Gastrocnemius medialis (tissue), 4 donors: ENCODE measurements at regions of chr10 and their contacts with region 1.

Region 1: GRCh38 chr10:100373298-100374136 is 26.5 kb downstream of the SCD start:
- DNase-seq: peak; percentile 98 to 99
- ATAC-seq: peak; percentile 77 to 80
- H3K4me3 ChIP-seq: peak overlapping the region; percentile 66 to 76 (median 74)
- H3K27ac ChIP-seq: peak overlapping the region; percentile 97 to 99 (median 97)
- H3K4me1 ChIP-seq: peaks cover 42 to 45% of the 10 kb centered on the region in 2 donors
- H3K27me3 ChIP-seq: no peaks in the 10 kb centered on the region
- CTCF ChIP-seq: no peak
- POLR2A ChIP-seq: peak; percentile 45 to 85

Region 2: GRCh38 chr10:99620713-99621453 is 752.6 kb before region 1 on chr10:
- in situ Hi-C with region 1: no loop called
- intact Hi-C with region 1: loop called (anchors 5 kb)
- DNase-seq: peak; percentile 86 to 91
- ATAC-seq: peak; percentile 70 to 89
- H3K4me3 ChIP-seq: peak overlapping the region; percentile 71 to 81 (median 75)
- H3K27ac ChIP-seq: peak overlapping the region; percentile 91 to 97 (median 96)
- H3K4me1 ChIP-seq: peaks cover 37 to 39% of the 10 kb centered on the region in 2 donors
- H3K27me3 ChIP-seq: no peaks in the 10 kb centered on the region
- CTCF ChIP-seq: peak in 3 of 5 experiments; percentile 18 to 20 (median 19)
- POLR2A ChIP-seq: peak; percentile 54 to 89

Region 3: GRCh38 chr10:100267237-100268104 is 106.0 kb before region 1 on chr10 and contains the start of gene CWF19L1:
- in situ Hi-C with region 1: no loop called
- intact Hi-C with region 1: no loop called
- DNase-seq: peak; percentile 78 to 86
- ATAC-seq: peak; percentile 99
- H3K4me3 ChIP-seq: peak within 1 kb of the TSS; percentile 68 to 99 (median 90)
- H3K27ac ChIP-seq: peak within 1 kb of the TSS; percentile 76 to 86 (median 80)
- H3K4me1 ChIP-seq: peaks cover 9 to 20% of the 10 kb centered on the region in 2 donors
- H3K27me3 ChIP-seq: no peaks in the 10 kb centered on the region
- CTCF ChIP-seq: no peak
- POLR2A ChIP-seq: peak; percentile 14 to 25
- total RNA-seq, gene CWF19L1: 11.6 to 13.8 (median 13.0) TPM

Region 4: DNA sequence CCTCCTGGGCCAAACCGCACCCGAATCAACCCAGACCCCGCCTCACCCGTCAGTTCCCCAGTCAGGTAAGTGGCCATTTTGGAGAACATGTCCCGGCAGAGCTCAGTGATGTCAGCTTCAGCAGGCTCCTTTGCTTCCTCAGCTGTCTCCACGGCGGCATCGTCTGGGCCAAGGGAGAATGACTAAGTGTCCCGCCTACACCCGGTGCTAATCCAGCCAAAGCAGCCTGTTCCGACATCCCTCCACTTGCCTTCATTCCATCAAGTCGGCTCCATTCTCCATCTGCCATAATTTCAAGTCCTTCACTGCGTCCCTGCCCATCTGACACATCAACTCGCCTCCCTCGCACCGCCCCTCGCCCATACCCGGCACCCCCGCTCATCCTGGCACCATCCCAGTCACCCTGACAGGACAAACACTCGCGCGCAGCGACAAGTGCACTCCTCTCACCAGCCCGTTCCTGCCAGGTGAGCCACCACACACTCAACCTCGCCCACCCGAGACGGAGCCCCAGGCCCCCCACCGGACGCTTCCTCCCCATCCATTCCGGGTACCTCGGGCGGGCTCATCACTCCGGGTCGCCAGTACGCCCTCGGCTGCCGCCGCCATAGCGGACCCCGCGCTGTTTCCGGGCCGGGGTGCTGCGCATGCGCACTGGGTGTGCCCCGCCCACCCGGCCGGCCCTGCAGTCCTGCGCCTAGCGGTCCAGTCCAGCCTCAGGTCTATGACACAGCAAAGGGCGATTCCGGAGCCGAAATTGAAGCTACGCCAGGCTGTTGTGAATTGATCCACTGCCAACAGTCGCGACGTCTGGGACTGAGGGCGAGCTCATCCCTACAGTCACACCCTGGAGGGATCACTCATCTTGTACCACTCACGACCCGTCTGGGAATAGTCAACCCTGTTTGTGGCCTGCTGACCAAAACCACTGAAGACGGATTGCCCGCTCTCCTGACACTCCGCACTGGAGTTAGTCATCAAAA is 87.2 kb before region 1 on chr10 and contains the start of gene BLOC1S2:
- in situ Hi-C with region 1: no loop called
- intact Hi-C with region 1: loop called (anchors 2 kb)
- DNase-seq: peak; percentile 80 to 90
- ATAC-seq: peak; percentile 89 to 92
- H3K4me3 ChIP-seq: peak within 1 kb of the TSS; percentile 70 to 95 (median 89)
- H3K27ac ChIP-seq: peak within 1 kb of the TSS; percentile 89 to 98 (median 96)
- H3K4me1 ChIP-seq: peaks cover 26 to 40% of the 10 kb centered on the region in 2 donors
- H3K27me3 ChIP-seq: no peaks in the 10 kb centered on the region
- CTCF ChIP-seq: peak in 2 of 5 experiments; percentile 35 to 36
- POLR2A ChIP-seq: peak; percentile 88 to 89
- total RNA-seq, gene BLOC1S2: 60.4 to 114 (median 75.1) TPM

Region 5: GRCh38 chr10:100433253-100434240 is 60.0 kb after region 1 on chr10:
- in situ Hi-C with region 1: no loop called
- intact Hi-C with region 1: loop called (anchors 5 kb)
- DNase-seq: peak; percentile 75 to 90
- ATAC-seq: peak; percentile 89 to 97
- H3K4me3 ChIP-seq: no peak overlapping the region
- H3K27ac ChIP-seq: no peak overlapping the region
- H3K4me1 ChIP-seq: peaks cover 4 to 7% of the 10 kb centered on the region in 2 donors
- H3K27me3 ChIP-seq: no peaks in the 10 kb centered on the region
- CTCF ChIP-seq: peak; percentile 98 to 99 (median 99)
- POLR2A ChIP-seq: no peak

Region 6: GRCh38 chr10:100642295-100642994 is 268.9 kb after region 1 on chr10:
- in situ Hi-C with region 1: no loop called
- intact Hi-C with region 1: no loop called
- DNase-seq: no peak
- ATAC-seq: no peak
- H3K4me3 ChIP-seq: no peak overlapping the region
- H3K27ac ChIP-seq: no peak overlapping the region
- H3K4me1 ChIP-seq: no peaks in the 10 kb centered on the region
- H3K27me3 ChIP-seq: peaks cover 20 to 49% (median 46%) of the 10 kb centered on the region in 3 donors
- CTCF ChIP-seq: no peak
- POLR2A ChIP-seq: no peak

Region 7: GRCh38 chr10:100912605-100913469 is 539.3 kb after region 1 on chr10 and contains the start of gene SLF2:
- in situ Hi-C with region 1: no loop called
- intact Hi-C with region 1: loop called (anchors 10 kb)
- DNase-seq: peak; percentile 98 to 99
- ATAC-seq: peak; percentile 98 to 99
- H3K4me3 ChIP-seq: peak within 1 kb of the TSS; percentile 99 to 100 (median 100)
- H3K27ac ChIP-seq: peak within 1 kb of the TSS; percentile 96 to 99 (median 97)
- H3K4me1 ChIP-seq: peaks cover 31 to 33% of the 10 kb centered on the region in 2 donors
- H3K27me3 ChIP-seq: no peaks in the 10 kb centered on the region
- CTCF ChIP-seq: no peak
- POLR2A ChIP-seq: peak; percentile 92 to 93
- total RNA-seq, gene SLF2: 9.2 to 23.0 (median 20.1) TPM